Activated CD8-positive, alpha-beta T cell treated with anti-CD3 and anti-CD28 coated beads, Interleukin-2, amount 10 ng/mL, durations not matched to agents 7 days and 5 days (primary cell): ENCODE measurements at regions of chr14 and their contacts with region 1.

Region 1: DNA sequence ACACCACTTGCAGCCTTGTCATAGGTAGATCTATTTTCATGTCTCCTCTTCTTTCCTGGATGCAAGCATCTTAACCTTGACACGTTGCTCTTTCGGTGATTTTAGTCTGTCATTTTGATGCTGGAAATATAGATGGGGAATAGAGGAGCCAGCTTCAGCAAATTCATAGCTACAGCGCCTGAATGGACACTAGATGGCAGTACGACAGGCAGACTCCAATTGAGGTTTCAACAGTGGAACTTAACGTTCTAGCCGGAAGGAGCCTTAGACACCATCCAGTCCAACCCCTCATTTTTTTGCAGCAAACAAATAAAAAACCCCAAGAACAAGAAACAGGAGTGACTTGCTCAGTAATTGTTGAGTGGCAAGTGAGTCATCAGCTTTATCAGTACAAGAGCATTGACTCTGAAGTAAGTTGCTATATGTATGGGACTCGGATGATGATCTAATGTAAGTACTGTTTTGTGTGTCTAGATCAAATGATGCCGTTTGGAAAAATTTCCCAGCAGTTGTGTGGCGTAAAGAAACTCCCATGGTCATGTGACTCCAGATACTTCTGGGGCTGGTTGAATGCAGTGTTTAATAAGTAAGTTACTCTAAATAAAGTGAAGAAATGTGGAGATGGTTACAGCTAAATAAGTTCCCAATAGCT is 9.0 kb downstream of the DMAC2L start:
- DNase-seq: peak; percentile 83
- ATAC-seq: peak; percentile 97
- H3K4me3 Mint-ChIP-seq: no peak overlapping the region
- H3K27ac Mint-ChIP-seq: no peak overlapping the region
- H3K4me1 Mint-ChIP-seq: peaks cover 9% of the 10 kb centered on the region
- H3K27me3 Mint-ChIP-seq: no peaks in the 10 kb centered on the region

Region 2: DNA sequence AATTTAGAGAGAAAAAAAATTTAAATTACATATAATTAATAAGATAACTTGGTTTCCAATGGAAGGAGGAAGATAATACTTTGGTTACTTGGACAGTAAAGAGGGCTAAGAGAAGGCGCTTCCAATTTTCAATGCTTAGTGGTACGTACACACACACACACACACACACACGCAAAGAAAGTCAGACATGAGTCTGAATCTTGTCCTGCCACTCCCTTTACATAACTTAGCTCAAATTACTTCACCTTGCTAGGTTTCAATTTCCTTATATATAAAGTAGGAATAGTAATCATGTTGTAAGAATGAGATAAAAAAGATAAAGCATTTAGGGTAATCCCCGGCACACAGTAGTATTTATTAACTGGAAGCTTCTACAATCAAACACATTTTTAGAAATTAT is 165.0 kb before region 1 on chr14:
- CTCF ChIA-PET with region 1: no interaction called
- POLR2A ChIA-PET with region 1: no interaction called
- DNase-seq: no peak
- ATAC-seq: no peak
- H3K4me3 Mint-ChIP-seq: no peak overlapping the region
- H3K27ac Mint-ChIP-seq: no peak overlapping the region
- H3K4me1 Mint-ChIP-seq: no peaks in the 10 kb centered on the region
- H3K27me3 Mint-ChIP-seq: no peaks in the 10 kb centered on the region

Region 3: DNA sequence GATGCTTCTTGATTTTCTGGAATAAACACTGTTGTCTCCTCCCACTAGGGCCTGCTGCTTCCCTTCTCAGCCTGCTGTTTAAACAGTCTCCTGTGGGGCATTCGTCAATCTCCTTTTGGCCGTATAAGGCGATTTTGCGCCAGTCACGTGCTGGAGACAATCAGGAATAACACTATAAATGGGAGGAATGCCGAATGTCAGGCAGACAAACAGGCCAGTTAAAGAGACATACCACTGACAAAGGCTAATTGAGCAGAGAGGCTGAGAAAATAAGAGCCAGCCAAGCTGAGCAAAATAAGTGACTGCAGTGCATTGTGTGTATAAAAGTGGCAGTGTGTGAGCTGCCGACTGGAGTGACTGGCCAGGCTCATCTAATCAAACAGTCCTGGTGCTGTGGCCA is 14.3 kb after region 1 on chr14:
- CTCF ChIA-PET with region 1: interaction called, 19 read pairs
- POLR2A ChIA-PET with region 1: no interaction called
- DNase-seq: no peak
- ATAC-seq: peak; percentile 41
- H3K4me3 Mint-ChIP-seq: no peak overlapping the region
- H3K27ac Mint-ChIP-seq: no peak overlapping the region
- H3K4me1 Mint-ChIP-seq: peaks cover 12% of the 10 kb centered on the region
- H3K27me3 Mint-ChIP-seq: no peaks in the 10 kb centered on the region

Region 4: GRCh38 chr14:50347521-50347920 is 26.4 kb after region 1 on chr14:
- CTCF ChIA-PET with region 1: interaction called, 16 read pairs
- POLR2A ChIA-PET with region 1: no interaction called
- DNase-seq: no peak
- ATAC-seq: no peak
- H3K4me3 Mint-ChIP-seq: no peak overlapping the region
- H3K27ac Mint-ChIP-seq: no peak overlapping the region
- H3K4me1 Mint-ChIP-seq: peaks cover 18% of the 10 kb centered on the region
- H3K27me3 Mint-ChIP-seq: no peaks in the 10 kb centered on the region

Region 5: DNA sequence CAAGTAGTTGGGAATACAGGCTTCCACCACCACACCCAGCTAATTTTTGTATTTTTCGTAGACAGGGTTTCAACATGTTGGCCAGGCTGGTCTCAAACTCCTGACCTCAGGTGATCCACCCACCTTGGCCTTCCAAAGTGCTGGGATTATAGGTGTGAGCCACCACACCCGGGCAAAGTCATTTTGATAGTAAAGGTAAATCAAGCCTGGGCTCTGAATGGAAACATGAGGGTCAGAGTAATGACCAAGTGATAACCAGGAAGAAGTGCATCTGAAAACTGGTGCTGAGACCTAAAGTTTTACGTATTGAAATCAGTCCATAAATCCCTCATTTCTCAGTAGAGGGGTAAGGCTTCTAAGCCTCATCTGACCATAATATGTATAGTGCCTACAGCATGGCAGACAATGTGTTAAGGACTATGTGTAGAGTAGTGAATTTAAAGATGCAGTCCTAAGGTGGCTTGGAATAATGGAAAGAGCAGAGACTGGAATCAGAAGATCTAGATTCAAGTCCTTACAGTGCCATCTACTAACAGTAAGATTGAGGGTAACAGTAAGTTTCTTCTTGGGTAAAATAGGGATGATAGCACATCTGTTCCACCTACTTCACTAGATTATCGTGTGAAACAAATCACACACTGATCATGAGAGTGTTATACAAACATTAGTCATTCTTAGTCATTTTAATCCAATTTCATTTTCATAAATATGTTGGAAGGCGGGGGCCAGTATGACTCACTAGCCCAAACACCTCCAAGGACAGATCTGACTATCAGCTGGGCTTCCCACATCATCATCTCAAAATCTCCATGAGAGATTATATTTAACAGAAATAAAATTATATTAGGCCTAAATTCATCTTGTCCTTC is 200.0 kb after region 1 on chr14:
- CTCF ChIA-PET with region 1: interaction called, 10 read pairs
- POLR2A ChIA-PET with region 1: no interaction called
- DNase-seq: peak; percentile 47
- ATAC-seq: peak; percentile 75
- H3K4me3 Mint-ChIP-seq: peak overlapping the region; percentile 58
- H3K27ac Mint-ChIP-seq: peak overlapping the region; percentile 78
- H3K4me1 Mint-ChIP-seq: peaks cover 42% of the 10 kb centered on the region
- H3K27me3 Mint-ChIP-seq: no peaks in the 10 kb centered on the region

Region 6: DNA sequence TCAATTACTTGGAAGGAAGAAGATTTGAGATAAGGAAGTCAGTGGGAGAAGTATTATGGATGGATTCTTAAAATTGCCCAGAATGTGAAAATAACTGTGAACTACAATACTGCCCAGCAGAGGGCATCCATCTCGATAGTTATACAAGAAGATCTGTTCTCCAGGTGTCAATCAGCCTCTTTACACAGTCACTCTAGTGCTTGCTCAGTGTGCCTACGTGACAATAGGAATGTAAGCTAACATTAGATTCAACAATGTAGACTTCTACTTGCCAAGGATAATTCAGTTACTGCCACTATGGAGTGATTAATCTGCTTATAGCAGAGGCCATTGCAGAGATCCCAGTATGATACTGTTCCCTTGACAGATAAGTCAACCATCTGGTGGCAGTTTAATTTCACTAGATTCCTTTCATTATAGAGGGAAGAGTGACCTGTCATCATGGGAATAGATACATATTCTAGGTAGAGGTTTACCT is 221.8 kb after region 1 on chr14:
- CTCF ChIA-PET with region 1: interaction called, 24 read pairs
- POLR2A ChIA-PET with region 1: no interaction called
- DNase-seq: peak; percentile 63
- ATAC-seq: peak; percentile 81
- H3K4me3 Mint-ChIP-seq: no peak overlapping the region
- H3K27ac Mint-ChIP-seq: no peak overlapping the region
- H3K4me1 Mint-ChIP-seq: peaks cover 10% of the 10 kb centered on the region
- H3K27me3 Mint-ChIP-seq: peaks cover 7% of the 10 kb centered on the region